ENCODE measurements at regions of chr16 and their contacts with region 1.

Region 1: DNA sequence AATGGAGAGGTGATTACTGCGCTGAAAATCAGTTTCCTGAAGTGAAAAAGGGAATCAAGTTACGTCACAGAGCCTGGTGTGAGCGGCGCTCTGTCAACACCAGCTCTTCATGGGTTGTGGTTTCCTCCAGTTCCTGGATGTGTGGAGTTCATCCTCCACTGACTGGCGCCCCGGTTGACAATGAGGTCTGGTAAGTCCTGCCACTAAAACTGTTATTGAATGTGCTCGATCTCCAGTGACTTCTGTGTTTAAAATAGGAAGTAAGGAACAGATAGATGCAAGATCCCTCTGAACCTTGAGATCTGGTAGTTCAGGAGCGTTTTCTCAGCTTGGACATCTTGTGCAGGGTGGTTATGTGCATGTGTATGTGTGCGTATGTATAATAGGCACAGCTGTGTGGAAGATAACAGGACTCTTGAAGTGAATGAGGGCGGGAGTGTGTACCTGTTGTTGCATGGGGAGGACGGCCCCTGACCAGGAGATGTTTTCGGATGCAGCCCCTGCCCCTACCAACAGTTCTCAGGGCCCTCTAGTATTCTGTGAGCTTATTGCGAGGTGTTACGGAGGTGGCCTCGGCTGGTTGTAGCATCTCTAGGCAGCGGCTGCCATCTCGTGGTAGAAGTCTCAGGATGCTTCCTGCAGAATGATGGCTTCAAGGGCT is 22.0 kb upstream of the GOT2 start:
- DNase-seq: peak; percentile 80
- ATAC-seq: peak; percentile 89
- H3K4me3 ChIP-seq: peak overlapping the region in 3 of 5 experiments; percentile 1 to 30 (median 21)
- H3K4me3 Mint-ChIP-seq: peak overlapping the region; percentile 66
- H3K27ac ChIP-seq: peak overlapping the region in 1 of 2 donors; percentile 16
- H3K27ac Mint-ChIP-seq: peak overlapping the region; percentile 21
- H3K4me1 ChIP-seq: peaks cover 6 to 7% of the 10 kb centered on the region in 2 donors
- H3K4me1 Mint-ChIP-seq: peaks cover 9% of the 10 kb centered on the region
- H3K27me3 ChIP-seq: no peaks in the 10 kb centered on the region
- H3K27me3 Mint-ChIP-seq: peaks cover 5% of the 10 kb centered on the region
- CTCF ChIP-seq: peak; percentile 76

Region 2: GRCh38 chr16:58336332-58337089 is 419.6 kb before region 1 on chr16:
- CTCF ChIA-PET with region 1: interaction called, 65 read pairs
- POLR2A ChIA-PET with region 1: no interaction called
- intact Hi-C with region 1: no loop called
- DNase-seq: peak; percentile 81
- ATAC-seq: peak; percentile 77
- H3K4me3 ChIP-seq: peak overlapping the region in 2 of 5 experiments; percentile 18 to 23
- H3K4me3 Mint-ChIP-seq: peak overlapping the region; percentile 46
- H3K27ac ChIP-seq: no peak overlapping the region
- H3K27ac Mint-ChIP-seq: no peak overlapping the region
- H3K4me1 ChIP-seq: peaks cover 0 to 8% of the 10 kb centered on the region in 2 donors
- H3K4me1 Mint-ChIP-seq: peaks cover 7% of the 10 kb centered on the region
- H3K27me3 ChIP-seq: no peaks in the 10 kb centered on the region
- H3K27me3 Mint-ChIP-seq: no peaks in the 10 kb centered on the region
- CTCF ChIP-seq: peak; percentile 95

Region 3: DNA sequence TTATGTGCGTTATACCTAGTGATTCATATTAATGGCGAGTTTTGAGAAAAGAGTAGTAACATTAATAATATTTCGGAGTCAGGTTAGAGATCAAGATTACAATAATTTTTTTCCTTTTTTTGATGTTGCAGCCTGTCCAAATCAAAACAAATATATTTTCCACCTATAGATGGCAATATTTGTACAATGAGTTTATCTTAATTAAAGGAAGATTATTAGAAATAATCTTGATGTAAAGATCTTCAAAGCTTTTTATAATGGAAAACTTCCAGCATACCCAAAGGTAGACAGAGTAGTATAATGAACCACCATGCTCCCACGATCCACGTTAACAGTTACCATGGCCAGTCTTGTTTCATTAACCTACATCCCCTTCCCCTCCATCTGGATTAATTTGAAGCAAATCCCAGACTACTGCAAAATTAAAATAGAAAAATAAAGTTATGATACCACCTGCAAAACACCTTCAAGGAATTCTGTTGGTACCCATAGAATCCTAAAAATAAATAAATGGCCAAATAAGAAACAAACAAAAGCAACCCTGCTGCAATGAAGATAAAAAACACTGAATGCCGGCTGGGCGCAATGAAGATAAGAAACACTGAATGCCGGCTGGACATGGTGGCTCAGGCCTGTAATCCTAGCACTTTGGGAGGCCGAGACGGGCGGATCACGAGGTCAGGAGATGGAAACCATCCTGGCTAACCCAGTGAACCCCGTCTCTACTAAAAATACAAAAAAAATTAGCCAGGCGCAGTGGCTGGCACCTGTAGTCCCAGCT is 410.4 kb before region 1 on chr16:
- CTCF ChIA-PET with region 1: no interaction called
- POLR2A ChIA-PET with region 1: no interaction called
- intact Hi-C with region 1: loop called (anchors 2 kb)
- DNase-seq: no peak
- ATAC-seq: no peak
- H3K4me3 ChIP-seq: no peak overlapping the region
- H3K4me3 Mint-ChIP-seq: no peak overlapping the region
- H3K27ac ChIP-seq: no peak overlapping the region
- H3K27ac Mint-ChIP-seq: no peak overlapping the region
- H3K4me1 ChIP-seq: no peaks in the 10 kb centered on the region
- H3K4me1 Mint-ChIP-seq: no peaks in the 10 kb centered on the region
- H3K27me3 ChIP-seq: peaks cover 0 to 13% (median 1%) of the 10 kb centered on the region in 4 experiments
- H3K27me3 Mint-ChIP-seq: peaks cover 39% of the 10 kb centered on the region
- CTCF ChIP-seq: peak; percentile 41

Region 4: DNA sequence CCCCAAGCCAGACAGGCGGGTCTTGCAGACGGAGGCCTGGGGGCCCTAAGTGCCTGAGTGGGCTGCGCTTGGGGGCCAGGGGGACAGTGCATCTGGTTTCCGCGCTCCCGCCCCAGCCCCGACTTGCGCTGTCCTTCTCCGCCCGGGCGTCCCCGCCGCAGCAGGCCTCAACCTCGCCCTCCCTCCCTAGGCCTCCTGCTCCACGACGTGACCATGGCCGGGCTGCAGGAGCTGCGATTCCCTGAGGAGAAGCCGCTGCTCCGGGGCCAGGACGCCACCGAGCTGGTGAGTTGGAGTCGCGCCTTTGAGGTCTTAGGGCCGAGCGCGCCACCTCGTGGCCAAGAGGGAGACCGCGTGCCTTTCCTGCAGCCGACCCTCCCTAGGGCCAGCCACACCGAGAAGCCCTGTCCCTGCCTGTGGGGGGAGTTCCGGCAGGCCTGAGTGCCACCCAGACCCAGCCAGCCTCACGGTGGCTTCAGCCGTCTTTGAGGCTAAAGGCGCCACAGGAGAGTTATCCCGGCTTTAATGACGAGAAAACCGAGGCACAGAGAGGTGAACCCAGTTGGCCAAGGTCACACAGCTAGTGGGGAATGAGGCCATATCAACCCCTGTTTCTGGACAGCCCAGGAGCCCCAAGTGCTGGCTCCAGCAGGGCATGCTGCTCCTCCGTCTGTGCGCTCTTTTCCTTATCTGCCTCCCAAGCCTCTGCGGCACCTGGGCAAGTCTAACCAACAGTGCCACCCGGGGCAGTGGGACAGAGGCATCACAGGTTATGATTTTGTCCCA is 268.4 kb before region 1 on chr16:
- CTCF ChIA-PET with region 1: interaction called, 5 read pairs
- POLR2A ChIA-PET with region 1: no interaction called
- intact Hi-C with region 1: loop called (anchors 10 kb)
- DNase-seq: peak; percentile 79
- ATAC-seq: peak; percentile 95
- H3K4me3 ChIP-seq: no peak overlapping the region
- H3K4me3 Mint-ChIP-seq: no peak overlapping the region
- H3K27ac ChIP-seq: no peak overlapping the region
- H3K27ac Mint-ChIP-seq: no peak overlapping the region
- H3K4me1 ChIP-seq: peaks cover 3 to 7% of the 10 kb centered on the region in 2 donors
- H3K4me1 Mint-ChIP-seq: peaks cover 3% of the 10 kb centered on the region
- H3K27me3 ChIP-seq: peaks cover 0 to 5% (median 0%) of the 10 kb centered on the region in 4 experiments
- H3K27me3 Mint-ChIP-seq: peaks cover 11% of the 10 kb centered on the region
- CTCF ChIP-seq: peak; percentile 92

Region 5: GRCh38 chr16:58733671-58734458 is 22.3 kb before region 1 on chr16 and contains the start of gene GOT2:
- CTCF ChIA-PET with region 1: interaction called, 7 read pairs
- POLR2A ChIA-PET with region 1: no interaction called
- intact Hi-C with region 1: loop called (anchors 2 kb)
- DNase-seq: peak; percentile 84
- ATAC-seq: peak; percentile 98
- H3K4me3 ChIP-seq: peak within 1 kb of the TSS; percentile 58 to 96 (median 66)
- H3K4me3 Mint-ChIP-seq: peak within 1 kb of the TSS; percentile 98
- H3K27ac ChIP-seq: peak within 1 kb of the TSS in 1 of 2 donors; percentile 79
- H3K27ac Mint-ChIP-seq: peak within 1 kb of the TSS; percentile 68
- H3K4me1 ChIP-seq: peaks cover 20 to 23% of the 10 kb centered on the region in 2 donors
- H3K4me1 Mint-ChIP-seq: peaks cover 42% of the 10 kb centered on the region
- H3K27me3 ChIP-seq: peaks cover 0 to under 1% (median 0%) of the 10 kb centered on the region in 4 experiments
- H3K27me3 Mint-ChIP-seq: peaks cover 1% of the 10 kb centered on the region
- CTCF ChIP-seq: peak; percentile 93
- total RNA-seq, gene GOT2: 31.2 and 33.6 TPM in 2 replicates

Region 6: DNA sequence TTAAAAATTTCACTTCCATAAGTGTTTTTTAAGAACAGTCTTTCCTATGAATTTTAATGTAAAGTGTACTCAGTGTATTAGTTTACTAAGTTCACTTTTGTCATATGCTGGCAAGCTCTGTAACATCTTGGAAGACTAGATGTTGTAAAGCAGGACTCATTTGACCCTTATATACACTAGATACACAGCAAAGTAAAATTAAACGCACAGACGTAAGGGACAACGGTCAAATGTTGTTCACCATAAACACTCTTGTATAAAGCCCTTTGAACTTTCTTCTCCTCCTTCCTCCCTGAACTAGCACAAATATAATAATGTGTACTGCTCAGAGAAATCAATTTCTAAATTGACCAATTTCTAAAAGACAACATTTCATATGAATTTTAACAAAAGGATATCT is 15.0 kb before region 1 on chr16:
- CTCF ChIA-PET with region 1: interaction called, 12 read pairs
- POLR2A ChIA-PET with region 1: no interaction called
- intact Hi-C with region 1: no loop called
- DNase-seq: no peak
- ATAC-seq: no peak
- H3K4me3 ChIP-seq: no peak overlapping the region
- H3K4me3 Mint-ChIP-seq: no peak overlapping the region
- H3K27ac ChIP-seq: no peak overlapping the region
- H3K27ac Mint-ChIP-seq: no peak overlapping the region
- H3K4me1 ChIP-seq: no peaks in the 10 kb centered on the region
- H3K4me1 Mint-ChIP-seq: no peaks in the 10 kb centered on the region
- H3K27me3 ChIP-seq: peaks cover 0 to 5% (median 0%) of the 10 kb centered on the region in 4 experiments
- H3K27me3 Mint-ChIP-seq: peaks cover 13% of the 10 kb centered on the region
- CTCF ChIP-seq: no peak

Measured in B cell (primary cell).